ENCODE measurements at regions of chr13 and their contacts with region 1.

Region 1: GRCh38 chr13:110925023-110925612 is 10.2 kb upstream of the ANKRD10 start:
- DNase-seq: no peak
- H3K4me3 ChIP-seq: no peak overlapping the region
- CTCF ChIP-seq: no peak
- POLR2A ChIP-seq: no peak

Region 2: DNA sequence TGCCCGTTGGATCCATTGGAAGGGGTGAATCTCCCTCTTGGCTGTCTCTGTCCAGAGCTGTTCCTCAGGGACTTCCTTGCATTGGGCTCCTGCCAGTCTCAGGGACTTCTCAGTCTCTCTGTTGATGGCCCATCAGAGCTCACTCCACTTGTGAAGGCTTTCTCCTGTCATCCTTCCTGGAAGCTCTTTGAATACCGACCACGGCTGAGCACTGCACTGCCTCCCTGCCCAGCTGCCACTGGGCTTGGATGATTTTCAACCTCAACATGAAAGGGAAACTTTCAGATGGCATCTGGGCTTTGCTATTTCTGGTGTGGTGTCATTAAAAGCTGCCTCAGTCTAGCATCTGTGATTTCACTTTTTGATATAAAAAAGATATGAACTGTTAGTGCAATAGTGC is 55.8 kb after region 1 on chr13:
- intact Hi-C with region 1: loop called (anchors 2 kb)
- DNase-seq: no peak
- H3K4me3 ChIP-seq: no peak overlapping the region
- CTCF ChIP-seq: no peak
- POLR2A ChIP-seq: no peak

Region 3: GRCh38 chr13:111228262-111229144 is 303.4 kb after region 1 on chr13:
- intact Hi-C with region 1: loop called (anchors 5 kb)
- DNase-seq: no peak
- H3K4me3 ChIP-seq: no peak overlapping the region
- CTCF ChIP-seq: no peak
- POLR2A ChIP-seq: no peak